Activated B cell treated with CpG ODN at 0.5 μM for 24 hours (primary cell): ENCODE measurements at regions of chr15 and their contacts with region 1.

Region 1: GRCh38 chr15:90557186-90558084 is 27.7 kb downstream of the CRTC3 start:
- DNase-seq: no peak
- ATAC-seq: no peak
- H3K4me3 Mint-ChIP-seq: no peak overlapping the region
- H3K27ac Mint-ChIP-seq: peak overlapping the region; percentile 16
- H3K4me1 Mint-ChIP-seq: peaks cover 81% of the 10 kb centered on the region
- H3K27me3 Mint-ChIP-seq: no peaks in the 10 kb centered on the region
- CTCF ChIP-seq: no peak

Region 2: GRCh38 chr15:90571063-90571541 is 13.7 kb after region 1 on chr15:
- CTCF ChIA-PET with region 1: no interaction called
- POLR2A ChIA-PET with region 1: interaction called, 4 read pairs
- intact Hi-C with region 1: loop called (anchors 2 kb)
- DNase-seq: peak; percentile 25
- ATAC-seq: peak; percentile 81
- H3K4me3 Mint-ChIP-seq: peak overlapping the region; percentile 68
- H3K27ac Mint-ChIP-seq: peak overlapping the region; percentile 84
- H3K4me1 Mint-ChIP-seq: peaks cover 61% of the 10 kb centered on the region
- H3K27me3 Mint-ChIP-seq: no peaks in the 10 kb centered on the region
- CTCF ChIP-seq: no peak

Region 3: GRCh38 chr15:90902040-90902839 is 344.8 kb after region 1 on chr15:
- CTCF ChIA-PET with region 1: no interaction called
- POLR2A ChIA-PET with region 1: no interaction called
- intact Hi-C with region 1: loop called (anchors 5 kb)
- DNase-seq: peak; percentile 75
- ATAC-seq: peak; percentile 71
- H3K4me3 Mint-ChIP-seq: peak overlapping the region; percentile 87
- H3K27ac Mint-ChIP-seq: peak overlapping the region; percentile 86
- H3K4me1 Mint-ChIP-seq: peaks cover 34% of the 10 kb centered on the region
- H3K27me3 Mint-ChIP-seq: no peaks in the 10 kb centered on the region
- CTCF ChIP-seq: no peak

Region 4: DNA sequence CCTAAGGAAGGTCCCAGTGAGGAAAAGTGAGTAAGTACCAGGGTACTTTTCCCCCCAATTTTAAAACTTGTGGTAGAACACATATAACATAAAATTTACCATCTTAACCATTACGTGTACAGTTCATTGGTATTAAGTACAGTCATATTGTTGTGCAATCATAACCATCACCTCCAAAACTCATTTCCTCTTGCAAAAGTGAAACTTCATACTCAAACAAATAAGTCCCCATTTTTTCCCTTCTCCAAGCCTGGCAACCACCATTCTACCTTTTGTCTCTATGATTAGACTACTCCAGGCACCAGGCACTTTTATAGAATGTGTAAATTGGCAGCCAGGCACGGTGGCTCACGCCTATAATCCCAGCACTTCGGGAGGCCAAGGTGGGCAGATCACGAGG is 424.7 kb after region 1 on chr15:
- CTCF ChIA-PET with region 1: no interaction called
- POLR2A ChIA-PET with region 1: interaction called, 15 read pairs
- intact Hi-C with region 1: no loop called
- DNase-seq: no peak
- ATAC-seq: peak; percentile 43
- H3K4me3 Mint-ChIP-seq: peak overlapping the region; percentile 21
- H3K27ac Mint-ChIP-seq: peak overlapping the region; percentile 77
- H3K4me1 Mint-ChIP-seq: peaks cover 32% of the 10 kb centered on the region
- H3K27me3 Mint-ChIP-seq: no peaks in the 10 kb centered on the region
- CTCF ChIP-seq: no peak